PC-3 (cell line): ENCODE measurements at regions of chr6 and their contacts with region 1.

Region 1: DNA sequence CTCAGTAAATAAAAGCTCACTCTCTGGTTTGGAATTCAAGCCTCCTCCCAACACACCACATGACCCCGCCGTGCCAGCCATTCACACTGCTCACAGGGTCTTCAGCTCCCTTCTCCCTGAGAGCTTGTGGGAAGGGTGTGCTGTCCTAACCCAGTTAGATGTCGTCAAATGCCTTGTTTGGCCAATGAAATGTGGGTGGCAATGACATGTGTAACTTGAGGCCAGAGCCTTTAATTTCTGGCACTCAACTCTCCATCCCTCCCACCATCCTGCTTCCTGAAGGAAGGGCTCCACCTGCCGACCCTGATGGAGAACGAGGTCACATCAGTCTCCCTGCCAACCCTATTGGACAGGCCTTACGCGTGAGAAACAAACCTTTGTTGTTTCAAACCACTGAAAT is 224.5 kb upstream of the AGPAT4 start:
- DNase-seq: peak; percentile 77
- ATAC-seq: no peak
- H3K4me3 ChIP-seq: no peak overlapping the region
- H3K27ac ChIP-seq: no peak overlapping the region
- H3K4me1 ChIP-seq: no peaks in the 10 kb centered on the region
- H3K27me3 ChIP-seq: peaks cover 22% of the 10 kb centered on the region
- CTCF ChIP-seq: peak; percentile 81

Region 2: GRCh38 chr6:161139766-161140553 is 358.4 kb before region 1 on chr6:
- CTCF ChIA-PET with region 1: no interaction called
- POLR2A ChIA-PET with region 1: no interaction called
- intact Hi-C with region 1: no loop called
- DNase-seq: peak; percentile 50
- ATAC-seq: peak; percentile 67
- H3K4me3 ChIP-seq: no peak overlapping the region
- H3K27ac ChIP-seq: peak overlapping the region; percentile 86
- H3K4me1 ChIP-seq: peaks cover 33% of the 10 kb centered on the region
- H3K27me3 ChIP-seq: no peaks in the 10 kb centered on the region
- CTCF ChIP-seq: 0 out of 2 replicates have a peak, but pooled peaks have one; percentile 31

Region 3: DNA sequence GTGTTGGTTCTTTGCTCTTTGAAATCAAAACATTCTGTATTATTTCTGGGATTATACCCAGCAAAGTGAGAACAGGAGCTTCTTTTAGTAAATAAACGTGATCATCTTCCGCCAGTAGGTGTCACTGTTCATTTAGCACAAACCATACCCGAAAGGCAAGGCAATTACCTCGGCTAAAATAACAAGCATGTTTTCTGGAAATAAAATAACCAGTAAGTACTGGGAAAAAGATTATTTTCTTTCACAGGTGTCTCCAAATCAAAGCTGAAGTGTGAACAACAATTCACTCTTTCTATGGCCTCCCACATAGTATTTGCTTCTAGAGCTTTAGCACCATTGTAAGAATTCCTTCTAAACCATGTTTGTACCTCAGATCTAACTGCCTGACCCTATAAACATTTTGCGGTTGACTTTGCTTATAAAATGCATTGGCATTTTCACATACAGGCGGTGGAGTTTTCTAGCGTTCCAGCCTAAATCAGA is 79.9 kb before region 1 on chr6:
- CTCF ChIA-PET with region 1: no interaction called
- POLR2A ChIA-PET with region 1: no interaction called
- intact Hi-C with region 1: loop called (anchors 1 kb)
- DNase-seq: peak; percentile 83
- ATAC-seq: peak; percentile 64; the same call in 1 of the 2 replicates
- H3K4me3 ChIP-seq: no peak overlapping the region
- H3K27ac ChIP-seq: no peak overlapping the region
- H3K4me1 ChIP-seq: peaks cover 17% of the 10 kb centered on the region
- H3K27me3 ChIP-seq: no peaks in the 10 kb centered on the region
- CTCF ChIP-seq: peak; percentile 76